HCT116 (cell line): ENCODE measurements at regions of chr2 and their contacts with region 1.

Region 1: DNA sequence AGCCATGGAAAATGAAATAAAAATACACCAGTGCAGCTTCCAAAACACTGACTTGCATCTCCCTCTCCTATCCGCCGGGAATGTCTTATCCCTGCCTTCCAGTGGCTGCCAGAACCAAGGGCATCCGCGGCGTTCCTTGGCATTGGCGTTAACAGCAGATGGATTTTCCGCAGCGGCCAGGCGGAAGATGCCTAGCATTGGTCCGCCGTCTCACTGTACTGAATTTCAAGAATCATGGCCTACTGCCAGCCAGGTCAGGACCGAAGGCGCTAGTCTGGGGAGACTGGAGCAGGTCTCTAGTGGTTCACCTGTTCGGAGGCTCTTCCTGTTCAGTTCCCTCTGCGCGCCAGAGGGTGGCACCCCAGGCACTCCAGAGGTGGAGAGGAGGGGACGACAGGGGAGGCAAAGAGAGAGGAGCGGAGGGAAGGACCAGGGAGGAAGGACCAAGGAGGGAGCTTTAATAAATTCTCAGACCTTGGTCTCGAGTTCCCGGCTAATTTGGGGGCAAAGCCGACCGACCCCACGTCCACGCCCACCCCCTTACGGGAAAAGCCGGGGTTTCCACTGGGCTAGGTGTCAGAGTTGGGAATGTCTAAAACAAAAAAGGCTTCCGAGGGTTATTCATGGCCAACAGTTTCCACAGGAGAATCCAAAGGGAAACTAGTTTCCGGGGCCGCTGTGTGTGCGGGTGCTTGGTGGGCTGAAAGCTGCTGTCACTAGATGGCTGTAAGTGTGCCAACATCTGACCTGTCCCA is 3.7 kb upstream of the BCL2L11 start:
- DNase-seq: peak; percentile 75
- ATAC-seq: peak; percentile 70
- H3K4me3 ChIP-seq: peak overlapping the region; percentile 39 to 56
- H3K27ac ChIP-seq: 0 out of 2 replicates have a peak overlapping the region, but pooled peaks have one; percentile 52
- H3K4me1 ChIP-seq: peaks cover 28 to 48% of the 10 kb centered on the region in 2 experiments
- H3K27me3 ChIP-seq: no peaks in the 10 kb centered on the region
- CTCF ChIP-seq: peak in 2 of 3 experiments; percentile 93 to 96; a peak in 4 of 6 replicates
- POLR2A ChIP-seq: no peak
- RAD21 ChIP-seq: no peak

Region 2: GRCh38 chr2:110677530-110678456 is 439.2 kb before region 1 on chr2 and contains the start of gene BUB1:
- CTCF ChIA-PET with region 1: no interaction called
- POLR2A ChIA-PET with region 1: no interaction called
- RAD21 ChIA-PET with region 1: no interaction called
- intact Hi-C with region 1: loop called (anchors 5 kb)
- DNase-seq: peak; percentile 91
- ATAC-seq: peak; percentile 94
- H3K4me3 ChIP-seq: peak within 1 kb of the TSS; percentile 68 to 98
- H3K27ac ChIP-seq: peak within 1 kb of the TSS; percentile 68
- H3K4me1 ChIP-seq: peaks cover 24 to 34% of the 10 kb centered on the region in 2 experiments
- H3K27me3 ChIP-seq: no peaks in the 10 kb centered on the region
- CTCF ChIP-seq: no peak
- POLR2A ChIP-seq: peak; percentile 95
- RAD21 ChIP-seq: no peak
- total RNA-seq, gene BUB1: 80.2 TPM

Region 3: GRCh38 chr2:110807522-110807921 is 309.5 kb before region 1 on chr2:
- CTCF ChIA-PET with region 1: interaction called, 4 read pairs
- POLR2A ChIA-PET with region 1: no interaction called
- RAD21 ChIA-PET with region 1: no interaction called
- intact Hi-C with region 1: loop called (anchors 1 kb)
- DNase-seq: no peak
- ATAC-seq: no peak
- H3K4me3 ChIP-seq: no peak overlapping the region
- H3K27ac ChIP-seq: no peak overlapping the region
- H3K4me1 ChIP-seq: peaks cover 0 to 5% of the 10 kb centered on the region in 2 experiments; a peak in 2 of 4 replicates
- H3K27me3 ChIP-seq: no peaks in the 10 kb centered on the region
- CTCF ChIP-seq: no peak
- POLR2A ChIP-seq: no peak
- RAD21 ChIP-seq: no peak

Region 4: GRCh38 chr2:111028727-111029126 is 88.3 kb before region 1 on chr2:
- CTCF ChIA-PET with region 1: interaction called, 5 read pairs
- POLR2A ChIA-PET with region 1: interaction called, 7 read pairs
- RAD21 ChIA-PET with region 1: interaction called in 1 of 2 experiments, 4 read pairs
- intact Hi-C with region 1: loop called (anchors 1 kb)
- DNase-seq: peak; percentile 40
- ATAC-seq: peak; percentile 49
- H3K4me3 ChIP-seq: no peak overlapping the region
- H3K27ac ChIP-seq: no peak overlapping the region
- H3K4me1 ChIP-seq: peaks cover 33 to 48% of the 10 kb centered on the region in 2 experiments
- H3K27me3 ChIP-seq: no peaks in the 10 kb centered on the region
- CTCF ChIP-seq: peak; percentile 61 to 89 (median 76)
- POLR2A ChIP-seq: no peak
- RAD21 ChIP-seq: peak; percentile 94

Region 5: GRCh38 chr2:111698743-111699554 is 581.9 kb after region 1 on chr2:
- CTCF ChIA-PET with region 1: interaction called, 3 read pairs
- POLR2A ChIA-PET with region 1: interaction called, 7 read pairs
- RAD21 ChIA-PET with region 1: interaction called in 1 of 2 experiments, 7 read pairs
- intact Hi-C with region 1: loop called (anchors 2 kb)
- DNase-seq: peak; percentile 95
- ATAC-seq: peak; percentile 91
- H3K4me3 ChIP-seq: peak overlapping the region; percentile 27 to 46
- H3K27ac ChIP-seq: peak overlapping the region; percentile 61
- H3K4me1 ChIP-seq: peaks cover 38 to 57% of the 10 kb centered on the region in 2 experiments
- H3K27me3 ChIP-seq: peaks cover 6% of the 10 kb centered on the region; the same call in 1 of the 2 replicates
- CTCF ChIP-seq: peak in 2 of 3 experiments; percentile 32 to 64; a peak in 3 of 6 replicates
- POLR2A ChIP-seq: no peak
- RAD21 ChIP-seq: no peak